MCF 10A (cell line): ENCODE measurements at regions of chr13 and their contacts with region 1.

Region 1: GRCh38 chr13:110444226-110444653 is 117.3 kb downstream of the RAB20 start:
- DNase-seq: peak; percentile 29
- H3K4me3 Mint-ChIP-seq: no peak overlapping the region
- H3K27ac Mint-ChIP-seq: no peak overlapping the region
- H3K4me1 Mint-ChIP-seq: peaks cover 48% of the 10 kb centered on the region
- H3K27me3 Mint-ChIP-seq: no peaks in the 10 kb centered on the region
- CTCF ChIP-seq: peak; percentile 37

Region 2: DNA sequence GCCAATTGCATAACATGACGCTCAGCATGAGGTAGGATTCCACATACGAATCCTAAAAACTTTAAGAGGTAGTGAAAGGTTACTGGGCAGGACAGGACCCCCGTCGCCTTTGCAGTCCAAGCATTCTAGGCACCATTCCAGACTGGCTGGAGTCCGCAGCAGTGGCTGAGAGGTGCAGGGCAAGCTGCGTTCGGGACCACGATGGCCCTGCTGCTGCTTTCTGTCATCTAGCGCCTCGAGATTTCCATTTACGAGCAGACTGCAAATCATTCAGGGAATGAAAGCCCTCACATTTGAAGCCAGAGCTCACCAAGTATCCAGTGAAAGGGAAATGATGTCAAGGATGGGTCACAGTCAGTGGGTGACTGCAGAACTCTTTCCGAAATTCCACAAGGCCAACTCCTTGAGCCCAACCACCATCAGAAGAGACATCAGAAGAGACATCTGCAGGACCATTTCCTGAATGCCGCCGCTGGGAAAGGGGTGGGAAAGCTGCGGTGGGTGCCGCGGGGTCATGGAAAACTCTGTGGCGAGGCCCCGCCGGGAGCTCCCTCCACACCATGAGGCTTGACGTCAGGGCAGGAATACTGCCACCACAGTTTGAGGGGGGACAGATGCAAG is 225.5 kb before region 1 on chr13:
- CTCF ChIA-PET with region 1: interaction called, 58 read pairs
- POLR2A ChIA-PET with region 1: interaction called, 3 read pairs
- intact Hi-C with region 1: loop called (anchors 1 kb)
- DNase-seq: no peak
- H3K4me3 Mint-ChIP-seq: no peak overlapping the region
- H3K27ac Mint-ChIP-seq: no peak overlapping the region
- H3K4me1 Mint-ChIP-seq: no peaks in the 10 kb centered on the region
- H3K27me3 Mint-ChIP-seq: no peaks in the 10 kb centered on the region
- CTCF ChIP-seq: no peak

Region 3: DNA sequence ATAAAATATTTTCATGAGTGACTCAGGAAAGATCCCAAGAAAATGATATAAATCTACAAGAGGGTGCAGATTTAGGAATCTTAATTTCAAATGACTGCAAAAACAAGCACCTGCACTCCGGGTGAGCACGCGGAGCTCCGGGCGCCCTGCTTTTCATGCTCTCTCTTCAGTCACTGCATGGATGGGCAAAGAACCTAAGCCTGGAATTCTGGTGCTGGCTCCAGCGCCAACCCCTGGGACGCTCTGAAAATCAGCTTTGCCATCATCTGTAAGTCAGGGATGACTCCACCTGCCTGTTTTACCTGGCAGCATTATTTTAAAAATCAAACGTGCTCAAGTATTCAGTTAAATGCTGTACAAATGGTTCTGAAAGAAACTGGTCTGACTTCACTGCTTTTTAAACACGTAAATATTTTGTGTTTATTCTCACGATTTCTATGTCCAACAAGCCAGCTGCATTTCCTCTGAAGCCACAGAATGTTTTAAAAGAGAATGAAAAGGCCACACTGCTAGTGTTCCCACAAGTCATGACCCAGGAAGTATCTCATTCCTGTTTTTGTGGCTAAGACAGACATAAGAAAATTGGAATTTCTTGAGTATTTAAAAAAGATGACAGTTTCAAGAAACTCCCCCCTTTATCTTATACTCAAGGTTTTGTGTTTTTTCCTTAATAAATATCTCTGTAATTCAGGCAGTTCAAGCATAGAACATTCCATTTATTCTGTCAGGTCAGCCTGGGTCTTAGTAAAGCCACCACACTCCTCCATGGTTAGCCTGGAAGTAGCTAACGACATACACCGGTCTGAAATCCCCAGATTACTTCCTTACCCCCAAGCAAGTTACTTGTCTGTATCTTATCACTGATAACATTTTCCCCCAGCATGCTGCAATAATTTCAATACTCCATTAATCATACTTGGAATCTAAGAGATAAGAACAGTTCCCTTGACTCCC is 218.4 kb before region 1 on chr13:
- CTCF ChIA-PET with region 1: interaction called, 58 read pairs
- POLR2A ChIA-PET with region 1: interaction called, 3 read pairs
- intact Hi-C with region 1: loop called (anchors 1 kb)
- DNase-seq: no peak
- H3K4me3 Mint-ChIP-seq: no peak overlapping the region
- H3K27ac Mint-ChIP-seq: no peak overlapping the region
- H3K4me1 Mint-ChIP-seq: peaks cover 5% of the 10 kb centered on the region
- H3K27me3 Mint-ChIP-seq: no peaks in the 10 kb centered on the region
- CTCF ChIP-seq: no peak

Region 4: GRCh38 chr13:110485603-110486002 is 41.4 kb after region 1 on chr13:
- CTCF ChIA-PET with region 1: no interaction called
- POLR2A ChIA-PET with region 1: no interaction called
- intact Hi-C with region 1: no loop called
- DNase-seq: no peak
- H3K4me3 Mint-ChIP-seq: no peak overlapping the region
- H3K27ac Mint-ChIP-seq: no peak overlapping the region
- H3K4me1 Mint-ChIP-seq: no peaks in the 10 kb centered on the region
- H3K27me3 Mint-ChIP-seq: no peaks in the 10 kb centered on the region
- CTCF ChIP-seq: no peak